ENCODE measurements at regions of chr15 and their contacts with region 1.

Region 1: GRCh38 chr15:60774829-60775463 is 296.0 kb upstream of the ICE2 start:
- DNase-seq: no peak
- H3K4me3 Mint-ChIP-seq: no peak overlapping the region
- H3K27ac Mint-ChIP-seq: peak overlapping the region; percentile 48
- H3K4me1 Mint-ChIP-seq: peaks cover 28% of the 10 kb centered on the region
- H3K27me3 Mint-ChIP-seq: no peaks in the 10 kb centered on the region

Region 2: DNA sequence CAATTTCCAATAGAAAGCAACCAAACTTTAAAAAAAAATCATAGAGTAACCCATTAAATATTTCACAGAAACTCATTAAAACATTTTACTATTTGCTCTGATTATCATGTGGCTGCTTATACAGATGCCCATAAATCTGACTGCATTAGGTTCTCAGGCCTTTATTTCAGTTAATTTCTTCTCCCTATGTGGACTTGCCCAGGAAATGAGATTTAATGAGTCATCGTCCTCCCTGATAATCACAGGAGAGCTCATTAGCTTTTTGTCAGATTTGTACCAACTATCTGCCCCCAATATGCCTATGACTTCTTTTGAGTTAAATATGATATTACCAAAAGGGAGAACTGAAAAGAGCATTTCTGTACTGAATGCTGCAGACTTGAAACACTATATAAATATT is 602.8 kb before region 1 on chr15:
- intact Hi-C with region 1: no loop called
- DNase-seq: no peak
- H3K4me3 Mint-ChIP-seq: no peak overlapping the region
- H3K27ac Mint-ChIP-seq: no peak overlapping the region
- H3K4me1 Mint-ChIP-seq: no peaks in the 10 kb centered on the region
- H3K27me3 Mint-ChIP-seq: peaks cover 22% of the 10 kb centered on the region

Region 3: GRCh38 chr15:60760646-60761504 is 14.1 kb before region 1 on chr15:
- intact Hi-C with region 1: loop called (anchors 1 kb)
- DNase-seq: no peak
- H3K4me3 Mint-ChIP-seq: no peak overlapping the region
- H3K27ac Mint-ChIP-seq: peak overlapping the region; percentile 32
- H3K4me1 Mint-ChIP-seq: peaks cover 21% of the 10 kb centered on the region
- H3K27me3 Mint-ChIP-seq: no peaks in the 10 kb centered on the region

Region 4: DNA sequence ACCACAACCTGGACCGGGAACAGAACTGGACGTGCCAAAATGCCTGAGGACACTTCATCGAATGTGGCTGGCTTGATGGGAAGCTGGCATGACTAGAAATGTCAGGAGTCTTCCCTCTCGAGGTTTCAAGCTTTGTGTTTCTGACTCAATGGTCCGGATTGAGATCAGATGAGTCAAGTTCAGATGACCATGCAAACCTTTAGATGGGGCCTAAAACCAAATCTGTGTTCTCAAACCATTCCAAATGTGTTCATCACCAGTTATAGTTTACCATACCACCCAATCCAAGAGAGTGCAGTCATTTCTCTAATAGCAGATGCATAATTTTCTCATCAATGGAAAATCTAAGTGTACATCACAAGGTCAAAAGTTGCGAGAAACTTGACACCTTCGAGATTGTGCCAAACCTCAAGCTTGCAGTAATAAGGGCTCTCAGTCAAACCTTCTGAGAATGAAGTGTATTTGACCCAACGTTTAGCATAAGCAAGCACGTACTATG is 85.1 kb after region 1 on chr15:
- intact Hi-C with region 1: no loop called
- DNase-seq: no peak
- H3K4me3 Mint-ChIP-seq: no peak overlapping the region
- H3K27ac Mint-ChIP-seq: no peak overlapping the region
- H3K4me1 Mint-ChIP-seq: peaks cover 15% of the 10 kb centered on the region
- H3K27me3 Mint-ChIP-seq: no peaks in the 10 kb centered on the region

Measured in activated CD4-positive, alpha-beta T cell treated with anti-CD3 and anti-CD28 coated beads, Interleukin-2, amount 10 ng/mL, durations not matched to agents 24 days and 14 days (primary cell).